ENCODE measurements at regions of chr5 and their contacts with region 1.

Region 1: GRCh38 chr5:57950616-57951228 is 468.1 kb upstream of the ACTBL2 start:
- DNase-seq: no peak
- ATAC-seq: no peak
- H3K4me3 ChIP-seq: no peak overlapping the region
- H3K27ac ChIP-seq: no peak overlapping the region
- H3K4me1 ChIP-seq: no peaks in the 10 kb centered on the region; a peak in 1 of 5 replicates
- H3K27me3 ChIP-seq: no peaks in the 10 kb centered on the region
- CTCF ChIP-seq: no peak
- EP300 ChIP-seq: no peak
- POLR2A ChIP-seq: no peak
- RAD21 ChIP-seq: no peak

Region 2: GRCh38 chr5:57915536-57915935 is 35.2 kb before region 1 on chr5:
- CTCF ChIA-PET with region 1: no interaction called
- POLR2A ChIA-PET with region 1: no interaction called
- in situ Hi-C with region 1: no loop called
- intact Hi-C with region 1: no loop called
- DNase-seq: no peak
- ATAC-seq: no peak
- H3K4me3 ChIP-seq: no peak overlapping the region
- H3K27ac ChIP-seq: no peak overlapping the region
- H3K4me1 ChIP-seq: no peaks in the 10 kb centered on the region
- H3K27me3 ChIP-seq: no peaks in the 10 kb centered on the region
- CTCF ChIP-seq: no peak
- EP300 ChIP-seq: no peak
- POLR2A ChIP-seq: no peak
- RAD21 ChIP-seq: no peak

Region 3: DNA sequence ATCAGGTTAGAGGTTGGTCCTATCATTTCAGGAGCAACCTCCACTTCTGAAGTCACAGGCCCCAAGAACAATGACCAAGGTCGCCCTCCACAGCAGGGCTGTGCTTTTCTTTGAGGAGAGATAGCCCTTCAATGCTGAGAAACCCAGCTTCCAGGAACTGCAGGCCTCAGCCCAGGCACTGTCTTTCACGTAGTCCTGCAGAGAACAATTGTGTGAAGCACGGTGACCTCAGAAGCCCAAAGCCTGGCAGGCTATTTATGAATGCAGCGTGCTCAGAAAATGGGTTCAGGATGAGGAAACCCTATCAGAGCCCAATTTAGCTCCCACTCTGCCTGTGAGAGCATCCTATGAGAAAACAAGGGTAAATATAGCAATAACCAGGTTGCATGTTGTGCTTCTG is 120.8 kb after region 1 on chr5:
- CTCF ChIA-PET with region 1: no interaction called
- POLR2A ChIA-PET with region 1: no interaction called
- in situ Hi-C with region 1: no loop called
- intact Hi-C with region 1: loop called (anchors 10 kb)
- DNase-seq: peak in 2 of 4 experiments; percentile 43 to 68
- ATAC-seq: peak; percentile 88
- H3K4me3 ChIP-seq: no peak overlapping the region
- H3K27ac ChIP-seq: peak overlapping the region; percentile 49; the same call in 2 of the 3 replicates
- H3K4me1 ChIP-seq: no peaks in the 10 kb centered on the region
- H3K27me3 ChIP-seq: no peaks in the 10 kb centered on the region
- CTCF ChIP-seq: no peak
- EP300 ChIP-seq: no peak
- POLR2A ChIP-seq: no peak
- RAD21 ChIP-seq: peak in 1 of 2 experiments; percentile 33; a peak in 2 of 4 replicates